CD8-positive, alpha-beta T cell (primary cell): ENCODE measurements at regions of chr3 and their contacts with region 1.

Region 1: GRCh38 chr3:184513276-184514170 is 48.1 kb upstream of the EPHB3 start:
- DNase-seq: peak; percentile 67 to 89 (median 83)
- ATAC-seq: peak; percentile 99
- H3K4me3 ChIP-seq: peak overlapping the region; percentile 37 to 38
- H3K4me3 Mint-ChIP-seq: peak overlapping the region; percentile 52
- H3K27ac ChIP-seq: no peak overlapping the region
- H3K27ac Mint-ChIP-seq: no peak overlapping the region
- H3K4me1 ChIP-seq: peaks cover 11% of the 10 kb centered on the region
- H3K4me1 Mint-ChIP-seq: peaks cover 8% of the 10 kb centered on the region
- H3K27me3 ChIP-seq: peaks cover 8 to 15% of the 10 kb centered on the region in 2 experiments
- H3K27me3 Mint-ChIP-seq: peaks cover 57% of the 10 kb centered on the region
- CTCF ChIP-seq: peak; percentile 84

Region 2: GRCh38 chr3:183895296-183895695 is 618.2 kb before region 1 on chr3:
- CTCF ChIA-PET with region 1: interaction called, 5 read pairs
- POLR2A ChIA-PET with region 1: no interaction called
- intact Hi-C with region 1: loop called (anchors 1 to 10 kb)
- DNase-seq: peak in 7 of 9 experiments; percentile 24 to 72 (median 39)
- ATAC-seq: peak; percentile 97
- H3K4me3 ChIP-seq: no peak overlapping the region
- H3K4me3 Mint-ChIP-seq: no peak overlapping the region
- H3K27ac ChIP-seq: no peak overlapping the region
- H3K27ac Mint-ChIP-seq: no peak overlapping the region
- H3K4me1 ChIP-seq: no peaks in the 10 kb centered on the region
- H3K4me1 Mint-ChIP-seq: no peaks in the 10 kb centered on the region
- H3K27me3 ChIP-seq: no peaks in the 10 kb centered on the region
- H3K27me3 Mint-ChIP-seq: peaks cover 29% of the 10 kb centered on the region
- CTCF ChIP-seq: peak; percentile 70

Region 3: DNA sequence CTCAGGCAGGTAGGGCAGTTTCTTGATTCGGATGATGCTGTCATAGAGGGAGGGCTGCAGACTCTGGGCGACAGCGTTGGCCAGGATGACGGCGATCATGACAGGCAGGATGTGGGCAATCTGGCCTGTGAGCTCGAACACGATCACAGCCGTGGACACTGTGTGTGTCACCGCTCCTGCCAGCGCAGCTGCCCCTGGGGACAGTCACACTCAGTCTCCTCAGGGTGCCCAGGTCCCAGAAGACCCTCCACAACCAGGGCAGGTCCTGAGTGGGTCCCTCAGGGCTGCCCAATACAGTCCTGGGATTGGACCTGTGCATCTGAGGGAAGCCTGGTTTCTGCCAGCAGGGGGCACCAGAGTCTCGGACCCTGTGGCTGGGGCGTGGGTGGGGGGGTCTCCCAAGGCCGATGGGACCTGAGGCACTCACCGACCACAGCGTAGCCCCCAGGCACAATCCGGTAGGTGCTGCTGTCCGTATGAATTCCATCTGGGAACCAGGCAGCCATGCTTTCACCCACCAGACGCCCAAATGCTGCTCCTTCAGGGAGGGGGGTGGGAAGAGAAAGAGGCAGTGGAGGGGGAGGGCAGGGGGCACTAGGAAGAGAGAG is 159.3 kb before region 1 on chr3:
- CTCF ChIA-PET with region 1: interaction called, 79 read pairs
- POLR2A ChIA-PET with region 1: no interaction called
- intact Hi-C with region 1: loop called (anchors 1 kb)
- DNase-seq: peak in 8 of 9 experiments; percentile 48 to 79 (median 70)
- ATAC-seq: peak; percentile 81
- H3K4me3 ChIP-seq: no peak overlapping the region
- H3K4me3 Mint-ChIP-seq: no peak overlapping the region
- H3K27ac ChIP-seq: no peak overlapping the region
- H3K27ac Mint-ChIP-seq: no peak overlapping the region
- H3K4me1 ChIP-seq: peaks cover 7% of the 10 kb centered on the region
- H3K4me1 Mint-ChIP-seq: peaks cover 3% of the 10 kb centered on the region
- H3K27me3 ChIP-seq: no peaks in the 10 kb centered on the region
- H3K27me3 Mint-ChIP-seq: no peaks in the 10 kb centered on the region
- CTCF ChIP-seq: peak; percentile 57

Region 4: GRCh38 chr3:184417619-184418327 is 95.8 kb before region 1 on chr3:
- CTCF ChIA-PET with region 1: interaction called, 44 read pairs
- POLR2A ChIA-PET with region 1: no interaction called
- intact Hi-C with region 1: loop called (anchors 1 to 10 kb)
- DNase-seq: peak; percentile 31 to 80 (median 72)
- ATAC-seq: peak; percentile 97
- H3K4me3 ChIP-seq: no peak overlapping the region
- H3K4me3 Mint-ChIP-seq: no peak overlapping the region
- H3K27ac ChIP-seq: no peak overlapping the region
- H3K27ac Mint-ChIP-seq: no peak overlapping the region
- H3K4me1 ChIP-seq: no peaks in the 10 kb centered on the region
- H3K4me1 Mint-ChIP-seq: no peaks in the 10 kb centered on the region
- H3K27me3 ChIP-seq: no peaks in the 10 kb centered on the region
- H3K27me3 Mint-ChIP-seq: peaks cover 1% of the 10 kb centered on the region
- CTCF ChIP-seq: peak; percentile 68

Region 5: DNA sequence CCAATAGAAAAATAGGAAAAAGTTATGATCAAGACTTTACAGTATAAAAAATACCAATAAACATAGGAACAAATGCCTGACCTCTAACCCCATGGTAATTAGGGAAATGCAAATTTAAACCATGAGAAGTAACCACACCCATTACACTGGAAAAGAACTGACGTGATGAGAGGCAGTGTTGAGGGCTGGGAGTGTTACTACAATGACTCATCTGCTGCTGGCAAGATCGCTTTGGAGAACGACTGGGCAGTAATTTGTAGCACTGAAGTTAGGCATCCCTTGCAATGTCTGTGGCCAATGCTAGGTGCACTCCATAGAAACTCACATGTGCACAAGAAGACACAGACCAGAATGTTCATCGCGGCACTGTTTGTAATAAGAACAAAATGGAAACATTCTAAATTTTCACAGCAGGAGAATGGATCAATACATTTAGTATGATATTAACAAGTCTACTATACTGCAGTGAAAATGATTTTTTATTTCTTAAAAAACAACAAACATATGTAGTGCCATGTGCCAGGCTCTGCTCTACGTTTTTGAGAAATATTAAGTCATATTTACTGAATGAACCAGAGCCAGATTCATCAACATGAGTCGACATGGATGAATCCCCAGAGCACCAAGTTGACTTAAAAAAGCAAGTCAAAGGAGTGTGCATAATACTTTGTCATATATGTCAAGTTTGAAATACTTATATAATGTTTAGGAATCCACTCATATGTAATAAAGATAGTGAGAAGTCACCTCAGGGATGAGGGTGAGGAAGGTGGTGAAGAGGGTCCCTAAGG is 10.5 kb after region 1 on chr3:
- CTCF ChIA-PET with region 1: interaction called, 50 read pairs
- POLR2A ChIA-PET with region 1: interaction called, 3 read pairs
- intact Hi-C with region 1: no loop called
- DNase-seq: peak in 2 of 9 experiments; percentile 21 to 29
- ATAC-seq: no peak
- H3K4me3 ChIP-seq: no peak overlapping the region
- H3K4me3 Mint-ChIP-seq: no peak overlapping the region
- H3K27ac ChIP-seq: no peak overlapping the region
- H3K27ac Mint-ChIP-seq: no peak overlapping the region
- H3K4me1 ChIP-seq: peaks cover 13% of the 10 kb centered on the region
- H3K4me1 Mint-ChIP-seq: peaks cover 14% of the 10 kb centered on the region
- H3K27me3 ChIP-seq: peaks cover 0 to 12% of the 10 kb centered on the region in 2 experiments
- H3K27me3 Mint-ChIP-seq: peaks cover 30% of the 10 kb centered on the region
- CTCF ChIP-seq: no peak